Natural killer cell (primary cell): ENCODE measurements at regions of chr3 and their contacts with region 1.

Region 1: GRCh38 chr3:15731024-15731423 is 66.8 kb downstream of the ANKRD28 start:
- DNase-seq: peak; percentile 10 to 23
- ATAC-seq: peak; percentile 87 to 94 (median 91)
- H3K4me3 ChIP-seq: no peak overlapping the region
- H3K4me3 Mint-ChIP-seq: peak overlapping the region; percentile 83
- H3K27ac ChIP-seq: peak overlapping the region; percentile 32
- H3K27ac Mint-ChIP-seq: peak overlapping the region; percentile 93
- H3K4me1 ChIP-seq: peaks cover 13% of the 10 kb centered on the region
- H3K4me1 Mint-ChIP-seq: peaks cover 40 to 41% of the 10 kb centered on the region in 2 donors
- H3K27me3 ChIP-seq: no peaks in the 10 kb centered on the region
- H3K27me3 Mint-ChIP-seq: no peaks in the 10 kb centered on the region
- CTCF ChIP-seq: no peak

Region 2: DNA sequence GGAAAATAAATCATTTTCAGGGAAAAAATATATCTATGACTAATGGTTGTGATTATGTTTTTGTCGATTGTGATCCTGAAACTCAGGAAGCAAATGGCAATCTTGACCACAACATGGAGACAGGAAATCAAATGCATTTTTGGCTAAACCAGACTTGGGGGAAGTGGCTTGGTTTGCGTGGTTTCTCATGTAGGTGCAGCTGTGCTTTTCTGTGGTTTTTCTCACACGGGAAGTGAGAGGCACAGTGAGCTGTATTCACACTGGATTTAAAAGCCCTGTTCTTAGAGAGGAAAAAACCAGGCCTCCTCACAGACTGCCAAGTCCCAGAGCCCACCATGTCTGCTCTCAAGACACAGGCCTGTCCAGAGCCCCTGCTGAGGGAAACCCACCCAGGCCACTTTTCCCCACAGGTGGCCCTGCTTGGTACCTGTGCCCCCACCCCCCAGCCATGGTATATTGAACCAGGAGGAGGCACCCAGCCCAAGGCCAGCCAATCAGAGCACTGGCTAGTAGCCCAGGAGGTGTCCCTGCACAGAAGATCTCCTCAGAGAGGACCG is 83.3 kb before region 1 on chr3:
- intact Hi-C with region 1: loop called (anchors 1 kb)
- DNase-seq: peak; percentile 51 to 78
- ATAC-seq: peak; percentile 80 to 87 (median 81)
- H3K4me3 ChIP-seq: no peak overlapping the region
- H3K4me3 Mint-ChIP-seq: peak overlapping the region; percentile 92
- H3K27ac ChIP-seq: peak overlapping the region; percentile 16
- H3K27ac Mint-ChIP-seq: peak overlapping the region; percentile 83 to 94
- H3K4me1 ChIP-seq: peaks cover 51% of the 10 kb centered on the region
- H3K4me1 Mint-ChIP-seq: peaks cover 58 to 63% of the 10 kb centered on the region in 2 donors
- H3K27me3 ChIP-seq: no peaks in the 10 kb centered on the region
- H3K27me3 Mint-ChIP-seq: peaks cover 0 to 20% of the 10 kb centered on the region in 2 donors
- CTCF ChIP-seq: no peak

Region 3: GRCh38 chr3:15667484-15667883 is 63.5 kb before region 1 on chr3:
- intact Hi-C with region 1: loop called (anchors 1 kb)
- DNase-seq: peak; percentile 34 to 77
- ATAC-seq: peak; percentile 86 to 98 (median 93)
- H3K4me3 ChIP-seq: no peak overlapping the region
- H3K4me3 Mint-ChIP-seq: peak overlapping the region; percentile 52
- H3K27ac ChIP-seq: no peak overlapping the region
- H3K27ac Mint-ChIP-seq: peak overlapping the region; percentile 69 to 75
- H3K4me1 ChIP-seq: peaks cover 6% of the 10 kb centered on the region
- H3K4me1 Mint-ChIP-seq: peaks cover 15 to 35% of the 10 kb centered on the region in 2 donors
- H3K27me3 ChIP-seq: no peaks in the 10 kb centered on the region
- H3K27me3 Mint-ChIP-seq: no peaks in the 10 kb centered on the region
- CTCF ChIP-seq: no peak

Region 4: GRCh38 chr3:15797642-15798303 is 66.7 kb after region 1 on chr3 and contains the start of gene ANKRD28:
- intact Hi-C with region 1: loop called (anchors 1 kb)
- DNase-seq: peak in 1 of 2 donors; percentile 59
- ATAC-seq: peak; percentile 40 to 51 (median 40)
- H3K4me3 ChIP-seq: peak within 1 kb of the TSS; percentile 28
- H3K4me3 Mint-ChIP-seq: peak within 1 kb of the TSS; percentile 91
- H3K27ac ChIP-seq: peak within 1 kb of the TSS; percentile 92
- H3K27ac Mint-ChIP-seq: peak within 1 kb of the TSS; percentile 91 to 92
- H3K4me1 ChIP-seq: peaks cover 12% of the 10 kb centered on the region
- H3K4me1 Mint-ChIP-seq: peaks cover 74 to 80% of the 10 kb centered on the region in 2 donors
- H3K27me3 ChIP-seq: no peaks in the 10 kb centered on the region
- H3K27me3 Mint-ChIP-seq: no peaks in the 10 kb centered on the region
- CTCF ChIP-seq: peak; percentile 12
- total RNA-seq, gene ANKRD28: 58.0 to 99.7 (median 91.7) TPM

Region 5: DNA sequence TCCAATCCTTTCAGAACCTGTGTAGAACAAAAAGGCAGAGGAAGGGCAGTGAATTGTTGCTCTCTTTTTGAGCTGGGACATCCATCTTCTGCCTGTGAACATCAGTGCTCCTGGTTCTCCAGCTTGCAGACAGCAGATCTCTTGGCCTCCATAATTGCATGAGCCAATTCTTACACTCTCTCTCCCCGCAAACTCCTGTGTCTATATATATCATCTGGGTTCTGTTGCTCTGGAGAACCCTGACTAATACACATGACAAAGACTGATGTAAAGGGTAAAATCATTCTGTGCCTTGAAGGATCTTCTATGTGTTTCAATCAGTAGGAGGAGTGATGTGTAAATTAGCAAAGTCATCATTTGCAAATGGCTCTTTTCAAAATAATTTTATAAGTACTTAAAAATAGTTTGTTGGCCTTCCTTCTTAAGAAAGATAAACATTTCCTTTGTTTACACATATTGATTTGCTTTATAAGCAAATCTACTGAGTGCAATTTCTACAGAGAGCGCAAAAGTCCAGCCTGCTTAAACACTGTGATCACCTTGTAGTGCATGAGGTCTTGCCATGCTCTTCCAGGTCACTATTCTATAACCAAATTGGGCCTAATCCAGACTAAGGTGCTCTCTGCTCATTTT is 221.6 kb after region 1 on chr3:
- intact Hi-C with region 1: no loop called
- DNase-seq: no peak
- ATAC-seq: no peak
- H3K4me3 ChIP-seq: no peak overlapping the region
- H3K4me3 Mint-ChIP-seq: no peak overlapping the region
- H3K27ac ChIP-seq: no peak overlapping the region
- H3K27ac Mint-ChIP-seq: no peak overlapping the region
- H3K4me1 ChIP-seq: no peaks in the 10 kb centered on the region
- H3K4me1 Mint-ChIP-seq: no peaks in the 10 kb centered on the region
- H3K27me3 ChIP-seq: no peaks in the 10 kb centered on the region
- H3K27me3 Mint-ChIP-seq: peaks cover 0 to 4% of the 10 kb centered on the region in 2 donors
- CTCF ChIP-seq: no peak